A673 (cell line): ENCODE measurements at regions of chr10 and their contacts with region 1.

Region 1: GRCh38 chr10:123945325-123945920 is 53.8 kb upstream of the CPXM2 start:
- DNase-seq: peak; percentile 58
- H3K4me3 ChIP-seq: no peak overlapping the region
- H3K27ac ChIP-seq: no peak overlapping the region
- H3K4me1 ChIP-seq: no peaks in the 10 kb centered on the region
- H3K27me3 ChIP-seq: no peaks in the 10 kb centered on the region
- CTCF ChIP-seq: no peak

Region 2: DNA sequence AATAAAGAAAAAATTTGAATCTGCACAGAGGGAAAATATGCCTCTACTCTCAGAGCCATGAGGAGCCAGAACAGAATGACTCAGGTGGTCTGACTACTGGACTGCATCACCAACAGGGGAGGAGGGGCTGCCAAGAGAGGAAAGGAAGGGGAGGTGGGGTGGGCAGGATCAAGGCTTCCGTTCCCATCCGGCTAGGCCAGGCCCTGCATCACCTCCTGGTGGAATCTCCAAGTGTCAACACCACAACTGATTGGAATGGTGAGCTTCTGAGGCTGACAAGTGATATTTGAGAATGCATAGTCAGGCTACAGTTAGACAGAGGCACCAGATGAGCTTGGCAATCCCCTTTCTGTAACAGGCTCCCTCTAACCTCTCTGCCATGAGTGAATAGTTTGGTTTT is 289.7 kb before region 1 on chr10:
- CTCF ChIA-PET with region 1: no interaction called
- POLR2A ChIA-PET with region 1: no interaction called
- intact Hi-C with region 1: no loop called
- DNase-seq: no peak
- H3K4me3 ChIP-seq: no peak overlapping the region
- H3K27ac ChIP-seq: no peak overlapping the region
- H3K4me1 ChIP-seq: no peaks in the 10 kb centered on the region
- H3K27me3 ChIP-seq: peaks cover 10% of the 10 kb centered on the region
- CTCF ChIP-seq: no peak

Region 3: GRCh38 chr10:123991622-123992607 is 46.5 kb after region 1 on chr10:
- CTCF ChIA-PET with region 1: no interaction called
- POLR2A ChIA-PET with region 1: no interaction called
- intact Hi-C with region 1: no loop called
- DNase-seq: no peak
- H3K4me3 ChIP-seq: no peak overlapping the region
- H3K27ac ChIP-seq: no peak overlapping the region
- H3K4me1 ChIP-seq: no peaks in the 10 kb centered on the region
- H3K27me3 ChIP-seq: peaks cover 65% of the 10 kb centered on the region
- CTCF ChIP-seq: no peak

Region 4: GRCh38 chr10:124048371-124049290 is 103.2 kb after region 1 on chr10:
- CTCF ChIA-PET with region 1: no interaction called
- POLR2A ChIA-PET with region 1: no interaction called
- intact Hi-C with region 1: no loop called
- DNase-seq: no peak
- H3K4me3 ChIP-seq: no peak overlapping the region
- H3K27ac ChIP-seq: no peak overlapping the region
- H3K4me1 ChIP-seq: peaks cover under 1% of the 10 kb centered on the region
- H3K27me3 ChIP-seq: no peaks in the 10 kb centered on the region
- CTCF ChIP-seq: no peak

Region 5: DNA sequence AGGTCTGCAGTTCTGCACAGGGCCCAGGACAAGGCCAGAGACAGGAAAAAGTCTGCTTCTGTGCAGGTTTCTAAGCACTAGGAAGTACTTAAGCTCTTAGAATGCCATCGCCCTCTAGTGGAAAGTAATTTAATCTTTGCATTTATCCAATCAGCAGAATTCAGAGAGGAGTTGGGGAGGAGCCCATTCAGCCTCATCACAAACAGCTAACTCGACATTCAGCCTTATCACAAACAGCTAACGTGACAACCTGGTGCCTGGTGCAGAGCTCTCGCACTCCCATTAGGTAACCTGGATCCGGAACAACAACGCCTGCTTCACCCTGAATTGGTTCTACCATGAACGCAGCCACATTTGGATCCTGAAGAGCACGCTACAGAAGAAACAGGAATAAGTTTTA is 458.1 kb after region 1 on chr10:
- CTCF ChIA-PET with region 1: interaction called, 10 read pairs
- POLR2A ChIA-PET with region 1: no interaction called
- intact Hi-C with region 1: no loop called
- DNase-seq: peak; percentile 88
- H3K4me3 ChIP-seq: no peak overlapping the region
- H3K27ac ChIP-seq: no peak overlapping the region
- H3K4me1 ChIP-seq: no peaks in the 10 kb centered on the region
- H3K27me3 ChIP-seq: no peaks in the 10 kb centered on the region
- CTCF ChIP-seq: peak; percentile 70